Head of caudate nucleus (tissue), 42 donors: ENCODE measurements at regions of chr17 and their contacts with region 1.

Region 1: DNA sequence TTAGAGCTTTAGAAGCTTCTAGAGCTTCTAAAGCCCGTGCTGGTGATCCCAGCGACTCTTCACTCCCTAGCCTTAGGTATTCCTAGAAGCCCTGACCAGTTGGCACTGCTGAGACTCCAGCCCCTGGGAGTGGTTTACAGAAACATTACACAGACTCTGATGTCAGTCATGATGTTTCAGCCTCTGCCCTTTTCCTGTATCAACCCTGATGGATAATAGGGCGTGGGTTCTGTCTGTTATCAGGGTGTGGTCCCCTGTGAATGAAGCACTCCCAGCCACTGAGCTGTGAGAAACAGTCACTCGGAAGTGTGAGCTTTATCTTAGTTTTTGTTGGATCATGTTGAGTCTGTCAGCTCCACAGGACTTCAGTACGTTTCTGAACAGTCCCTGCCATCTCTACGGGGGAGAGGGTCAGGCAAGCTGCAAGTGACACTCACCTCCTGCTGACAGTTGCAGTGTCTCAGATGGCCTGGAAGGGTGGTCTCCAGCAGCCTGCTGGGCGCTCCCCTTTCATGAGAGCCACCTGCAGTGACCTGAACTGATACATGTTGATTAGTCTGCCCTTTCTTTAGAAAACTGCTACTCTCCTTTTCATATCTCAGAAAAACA is 12.8 kb downstream of the GOSR2 start:
- DNase-seq: no peak

Region 2: DNA sequence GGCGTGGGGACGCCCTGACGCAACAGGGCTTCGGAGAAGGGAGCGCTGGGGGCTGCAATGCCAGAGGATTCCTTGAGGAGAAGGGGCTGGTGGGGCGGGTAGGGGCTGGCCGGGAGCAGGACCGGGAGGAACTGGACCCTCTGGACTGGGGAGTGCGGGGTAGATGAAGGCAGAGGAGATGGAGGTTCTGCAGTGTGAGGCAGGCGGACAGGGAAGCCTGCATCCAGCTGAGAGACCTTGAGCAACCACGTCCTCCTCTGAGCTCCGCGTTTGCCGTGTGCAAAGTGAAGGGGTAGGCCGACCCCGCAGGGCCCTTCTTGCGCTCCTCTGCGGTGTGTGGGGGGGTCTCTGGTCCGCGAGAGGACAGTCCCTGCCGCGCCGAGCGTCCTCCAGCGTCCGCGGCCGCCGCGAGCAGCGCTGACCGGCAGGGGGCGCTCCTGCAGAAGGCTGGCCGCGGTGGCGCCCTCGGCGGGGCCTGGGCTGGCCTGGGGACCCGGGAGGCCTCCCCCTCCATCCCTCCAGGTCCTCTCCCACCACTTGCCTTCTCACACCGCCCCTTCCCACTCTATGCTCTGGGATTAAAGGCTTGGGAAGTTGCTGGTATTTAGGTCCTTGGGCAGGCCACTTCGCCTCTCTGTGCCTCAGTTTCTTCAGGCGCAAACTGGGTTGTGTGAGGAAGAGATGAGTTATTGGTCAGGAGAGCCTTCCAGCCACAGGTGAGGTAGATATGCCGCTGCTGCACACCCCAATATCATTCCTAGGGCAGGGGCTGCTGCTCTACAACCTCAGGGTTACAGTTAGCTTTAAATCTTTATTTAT is 94.0 kb before region 1 on chr17:
- intact Hi-C with region 1: loop called (anchors 10 kb)
- DNase-seq: peak in 10 of 42 donors; percentile 12 to 63 (median 33)

Region 3: DNA sequence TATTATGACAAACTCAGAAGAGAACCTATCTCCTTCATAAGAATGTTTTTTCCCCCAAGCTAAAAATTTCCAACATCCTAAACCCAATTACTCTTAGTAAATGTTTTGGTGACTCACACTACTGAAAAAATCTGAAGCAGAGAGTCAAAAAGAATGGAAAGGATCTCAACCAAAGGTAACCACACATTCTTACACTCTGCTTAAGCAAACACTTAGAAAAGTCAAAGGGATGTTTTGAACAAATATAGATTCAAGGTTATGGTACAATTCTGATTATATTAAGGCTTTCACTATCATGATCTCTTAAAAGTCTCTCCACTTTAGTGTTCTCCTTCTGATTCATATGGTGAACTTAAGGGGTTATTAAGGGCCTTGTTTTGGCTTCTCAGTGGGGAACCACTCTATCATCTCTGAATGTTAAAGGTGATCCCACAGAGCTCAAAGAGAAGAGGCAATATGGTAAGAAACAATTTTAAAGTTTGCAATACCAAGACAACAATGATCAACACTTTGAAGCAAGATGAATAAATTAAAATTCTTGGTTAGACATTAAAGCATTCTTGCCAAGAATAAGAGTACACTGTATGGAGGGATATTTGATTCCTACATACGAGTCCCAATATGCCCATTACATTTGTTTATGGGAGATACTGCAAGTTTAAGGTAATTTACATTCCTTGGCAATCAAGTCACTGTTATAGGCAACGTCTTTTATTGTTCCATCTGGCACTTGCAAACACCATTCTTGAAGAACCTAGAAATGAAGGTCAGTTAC is 184.2 kb after region 1 on chr17:
- intact Hi-C with region 1: no loop called
- DNase-seq: no peak